Activated CD4-positive, alpha-beta memory T cell treated with anti-CD3 and anti-CD28 coated beads, Interleukin-2, amount 10 ng/mL, durations not matched to agents 7 days and 5 days (primary cell): ENCODE measurements at regions of chr13 and their contacts with region 1.

Region 1: GRCh38 chr13:33228648-33229445 is 56.7 kb downstream of the STARD13 start:
- DNase-seq: no peak
- H3K4me3 Mint-ChIP-seq: no peak overlapping the region
- H3K27ac Mint-ChIP-seq: no peak overlapping the region
- H3K4me1 Mint-ChIP-seq: peaks cover 6% of the 10 kb centered on the region
- H3K27me3 Mint-ChIP-seq: peaks cover 7% of the 10 kb centered on the region

Region 2: DNA sequence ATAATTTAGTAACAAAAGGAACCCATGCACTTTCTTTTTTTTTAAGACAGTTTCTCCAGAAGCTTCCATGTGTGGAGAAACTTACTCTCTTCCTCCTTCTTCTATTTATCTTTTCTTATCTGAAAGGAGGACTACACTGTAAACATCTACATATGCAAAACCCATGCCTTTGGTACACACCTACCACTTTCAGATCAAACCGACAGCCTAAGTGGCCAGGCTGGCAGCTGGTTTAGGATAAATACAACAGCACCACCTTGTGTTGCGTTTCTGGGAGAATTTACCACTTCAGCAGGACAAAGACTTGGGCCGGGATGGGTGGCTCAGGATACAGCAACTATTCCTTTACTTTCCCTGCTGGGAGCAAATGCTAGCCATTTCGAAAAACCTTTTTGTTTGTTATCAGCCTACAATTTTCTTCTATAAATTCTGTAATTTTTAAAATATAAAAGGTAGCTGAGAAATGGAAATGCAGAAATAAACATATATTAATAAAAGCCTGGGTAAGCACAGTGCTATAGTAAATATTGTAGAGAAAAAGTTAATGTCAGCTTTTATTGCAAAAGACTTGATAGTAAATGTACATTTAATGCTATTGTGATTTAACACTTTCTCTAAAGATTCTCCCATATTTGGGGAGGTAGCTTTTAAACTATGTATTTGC is 495.1 kb after region 1 on chr13:
- CTCF ChIA-PET with region 1: interaction called, 23 read pairs
- POLR2A ChIA-PET with region 1: no interaction called
- DNase-seq: peak; percentile 76
- H3K4me3 Mint-ChIP-seq: no peak overlapping the region
- H3K27ac Mint-ChIP-seq: peak overlapping the region; percentile 17
- H3K4me1 Mint-ChIP-seq: peaks cover 32% of the 10 kb centered on the region
- H3K27me3 Mint-ChIP-seq: no peaks in the 10 kb centered on the region